Left ventricle myocardium superior (tissue), 1 donor: ENCODE measurements at regions of chr5 and their contacts with region 1.

Region 1: DNA sequence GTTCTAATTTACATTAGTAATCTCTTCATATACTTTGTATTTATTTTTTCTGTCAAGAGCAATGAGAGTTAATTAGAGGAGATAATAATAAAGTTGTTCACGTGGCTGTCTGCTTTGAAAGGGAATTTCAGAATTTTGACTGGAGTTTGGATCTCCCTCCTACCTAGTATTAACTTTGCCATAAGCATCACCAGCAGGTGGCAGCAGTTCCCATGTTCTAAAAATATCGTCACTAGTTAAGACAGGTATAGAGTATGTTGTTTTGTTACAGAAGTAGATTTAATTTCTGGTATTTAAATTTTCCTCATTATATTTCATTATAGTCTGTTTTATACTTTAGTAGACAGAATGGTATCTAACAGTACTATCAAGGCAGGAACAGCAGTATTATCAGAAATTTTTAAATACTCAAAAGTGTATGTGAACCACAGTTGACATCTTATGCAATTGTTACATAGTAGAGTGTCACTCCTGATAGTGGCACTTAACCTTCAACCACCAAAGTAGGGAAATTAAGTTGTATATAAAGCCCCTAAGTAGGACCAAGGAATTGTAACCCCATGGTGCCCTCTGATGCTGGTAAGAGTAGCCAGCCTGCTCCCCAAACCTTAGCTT is 20.4 kb downstream of the GNPDA1 start:
- DNase-seq: peak; percentile 63
- ATAC-seq: peak; percentile 80

Region 2: GRCh38 chr5:142145106-142145900 is 152.8 kb after region 1 on chr5:
- intact Hi-C with region 1: loop called (anchors 2 kb)
- DNase-seq: no peak
- ATAC-seq: peak; percentile 86